B cell (primary cell): ENCODE measurements at regions of chr2 and their contacts with region 1.

Region 1: DNA sequence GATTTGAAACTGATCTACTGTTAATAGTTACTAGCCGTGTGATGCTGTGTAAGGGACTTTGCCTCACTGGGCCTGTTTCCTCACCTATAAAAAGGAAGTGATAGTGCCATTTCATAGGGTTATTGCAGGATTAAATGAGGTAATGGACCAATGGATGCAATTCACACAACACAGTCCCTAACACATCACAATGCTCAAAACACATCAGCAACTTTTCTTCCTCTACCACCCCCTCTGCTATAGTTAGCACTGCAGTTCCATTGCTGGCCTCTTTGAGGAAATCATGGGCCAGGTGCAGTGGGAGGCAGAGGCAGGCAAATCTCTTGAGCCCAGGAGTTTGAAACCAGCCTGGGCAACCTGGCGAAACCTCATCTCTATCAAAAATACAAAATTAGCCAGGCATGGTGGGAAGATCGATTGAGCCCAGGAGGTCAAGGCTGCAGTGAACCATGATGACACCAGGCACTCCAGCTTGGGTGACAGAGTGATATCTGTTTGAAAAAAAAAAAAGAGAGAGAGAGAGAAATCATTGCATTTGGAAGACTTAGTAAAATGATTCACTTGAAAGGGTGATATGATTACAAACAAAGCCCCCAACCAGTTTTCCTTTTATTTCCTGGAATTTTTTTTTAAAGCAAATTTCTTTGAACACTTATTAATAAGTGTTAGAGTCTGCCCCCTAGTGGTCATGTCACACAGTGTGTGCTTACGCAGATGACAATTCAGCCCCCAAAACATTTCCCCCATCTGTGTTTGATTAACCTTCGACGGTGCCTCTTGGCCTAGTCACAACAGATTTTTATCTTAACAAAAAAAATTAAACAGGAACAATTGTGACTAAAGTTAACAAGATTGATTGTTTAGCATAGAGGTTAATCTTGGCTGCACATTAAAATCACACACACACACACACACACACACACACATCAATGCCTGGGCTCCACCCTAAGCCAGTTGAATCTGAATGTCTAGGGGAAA is 88.6 kb upstream of the BCL11A start:
- DNase-seq: peak; percentile 67
- ATAC-seq: peak; percentile 58
- H3K4me3 ChIP-seq: no peak overlapping the region
- H3K4me3 Mint-ChIP-seq: no peak overlapping the region
- H3K27ac ChIP-seq: no peak overlapping the region
- H3K27ac Mint-ChIP-seq: no peak overlapping the region
- H3K4me1 ChIP-seq: peaks cover 15 to 16% of the 10 kb centered on the region in 2 donors
- H3K4me1 Mint-ChIP-seq: peaks cover 22% of the 10 kb centered on the region
- H3K27me3 ChIP-seq: no peaks in the 10 kb centered on the region
- H3K27me3 Mint-ChIP-seq: peaks cover 3% of the 10 kb centered on the region
- CTCF ChIP-seq: peak; percentile 86

Region 2: GRCh38 chr2:60659026-60659425 is 16.9 kb after region 1 on chr2:
- CTCF ChIA-PET with region 1: interaction called, 23 read pairs
- POLR2A ChIA-PET with region 1: no interaction called
- intact Hi-C with region 1: no loop called
- DNase-seq: no peak
- ATAC-seq: no peak
- H3K4me3 ChIP-seq: no peak overlapping the region
- H3K4me3 Mint-ChIP-seq: no peak overlapping the region
- H3K27ac ChIP-seq: no peak overlapping the region
- H3K27ac Mint-ChIP-seq: peak overlapping the region; percentile 23
- H3K4me1 ChIP-seq: peaks cover 38 to 39% of the 10 kb centered on the region in 2 donors
- H3K4me1 Mint-ChIP-seq: peaks cover 56% of the 10 kb centered on the region
- H3K27me3 ChIP-seq: no peaks in the 10 kb centered on the region
- H3K27me3 Mint-ChIP-seq: no peaks in the 10 kb centered on the region
- CTCF ChIP-seq: no peak